Posterior cingulate gyrus (tissue), 11 donors: ENCODE measurements at regions of chr12 and their contacts with region 1.

Region 1: GRCh38 chr12:119780786-119781434 is 96.2 kb downstream of the CIT start:
- DNase-seq: peak in 5 of 10 donors; percentile 35 to 82 (median 54)

Region 2: DNA sequence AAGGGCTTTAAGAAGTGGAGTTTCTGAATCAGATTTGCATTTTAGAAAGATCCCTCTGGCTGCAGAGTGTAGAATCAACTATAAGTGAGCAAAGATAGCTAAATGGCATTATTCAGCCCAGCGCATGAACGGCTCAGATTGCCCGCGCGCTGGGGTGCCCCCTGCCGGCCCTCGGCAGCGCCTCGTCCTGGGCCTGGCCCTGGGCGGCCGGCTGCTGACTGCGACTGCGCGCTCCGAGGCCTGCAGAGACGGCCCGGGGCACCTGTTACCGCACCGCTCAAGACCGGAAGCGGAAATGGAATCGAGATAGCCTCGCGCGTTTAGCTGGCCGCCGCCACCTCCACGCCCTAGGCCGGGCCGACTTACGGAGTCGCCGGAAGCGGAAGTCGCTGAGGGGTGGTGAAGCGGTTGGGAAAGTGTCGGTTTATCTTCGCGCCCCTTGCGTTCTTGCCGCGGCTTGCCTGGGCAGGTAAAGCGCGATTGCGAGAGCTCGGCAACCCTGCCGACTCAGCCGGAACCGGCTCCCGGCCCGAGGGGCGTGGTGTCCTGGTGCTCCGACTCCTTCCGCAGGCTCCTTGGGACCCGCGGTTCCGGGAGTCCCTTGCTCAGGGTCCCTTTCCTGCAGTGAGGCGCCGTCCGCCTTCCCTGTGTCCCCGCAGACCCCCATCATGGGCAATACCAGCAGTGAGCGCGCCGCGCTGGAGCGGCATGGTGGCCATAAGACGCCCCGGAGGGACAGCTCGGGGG is 113.2 kb before region 1 on chr12 and contains the start of gene PRKAB1:
- intact Hi-C with region 1: loop called (anchors 5 kb)
- DNase-seq: peak; percentile 93 to 99 (median 94)

Region 3: DNA sequence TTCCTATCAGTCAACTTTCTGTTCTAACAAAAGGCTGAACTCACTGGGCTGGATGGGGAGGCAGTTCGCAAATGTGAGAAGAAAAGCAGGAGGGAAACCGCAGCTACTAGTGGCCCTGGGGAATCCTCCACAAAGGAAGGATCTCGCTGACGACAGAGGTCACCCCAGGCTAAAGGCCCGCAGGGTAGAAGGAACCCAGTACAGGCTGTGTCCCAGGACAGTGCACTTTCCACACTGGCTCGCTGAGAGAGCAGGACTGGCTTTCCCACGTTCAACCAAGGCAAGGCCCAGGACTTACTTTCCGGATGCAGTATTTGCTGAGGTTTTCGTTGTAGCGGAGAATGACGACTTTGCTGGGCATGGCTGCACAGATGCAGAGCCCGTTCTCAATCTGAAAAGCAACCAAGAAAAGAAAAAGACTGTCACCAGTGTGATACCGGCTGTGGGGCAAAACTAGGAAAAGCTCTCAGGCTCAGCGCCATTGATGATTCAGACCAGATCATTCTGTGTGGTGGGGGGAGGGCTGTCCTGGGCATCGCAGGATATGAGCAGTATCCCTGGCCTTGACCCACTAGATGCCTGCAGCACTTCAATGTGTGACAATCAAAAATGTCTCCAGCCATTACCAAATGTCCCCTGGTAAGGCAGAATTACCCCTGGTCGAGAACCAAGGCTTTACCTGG is 76.7 kb before region 1 on chr12:
- intact Hi-C with region 1: loop called (anchors 5 kb)
- DNase-seq: peak in 2 of 10 donors; percentile 39 to 87